HCT116 (cell line): ENCODE measurements at regions of chr5 and their contacts with region 1.

Region 1: DNA sequence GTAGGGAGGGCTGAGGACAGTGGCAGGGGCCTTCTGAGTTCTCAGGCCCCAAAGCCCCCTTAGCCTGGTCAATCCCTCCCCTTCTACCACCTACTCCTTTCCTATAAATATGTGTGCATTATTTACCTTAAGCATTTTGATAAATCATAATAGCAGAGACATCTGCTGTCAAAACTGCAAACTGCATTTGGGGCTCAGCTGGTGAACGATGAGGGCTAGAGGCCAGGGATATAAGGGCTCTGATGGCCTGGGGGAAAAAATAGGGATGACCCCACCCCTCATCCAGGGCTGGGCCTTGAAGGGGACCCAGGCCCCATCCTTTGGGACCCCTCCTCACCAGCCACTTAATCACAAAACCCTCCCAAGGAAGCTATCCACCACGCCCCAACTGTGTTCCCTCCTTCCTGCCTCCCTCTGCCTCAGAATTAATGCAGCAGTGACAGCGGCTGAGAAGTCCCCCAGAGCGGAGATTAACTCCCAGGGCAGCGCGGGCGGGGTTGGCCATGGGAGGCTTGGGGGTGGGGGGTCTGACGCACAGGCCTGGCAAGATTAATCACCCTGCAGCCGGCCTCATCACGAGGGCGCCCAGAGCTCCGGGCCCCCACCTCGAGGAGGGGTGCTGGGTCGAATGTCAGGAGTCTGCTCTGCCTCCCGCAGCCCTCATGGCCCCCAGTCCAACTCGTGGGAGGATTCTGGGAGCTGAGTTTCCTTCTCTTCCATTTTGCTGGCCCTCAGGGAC is 42.1 kb downstream of the CXXC5 start:
- DNase-seq: no peak
- ATAC-seq: peak; percentile 58
- H3K4me3 ChIP-seq: no peak overlapping the region
- H3K27ac ChIP-seq: no peak overlapping the region; the same call in 1 of the 2 replicates
- H3K4me1 ChIP-seq: peaks cover 4 to 16% of the 10 kb centered on the region in 2 experiments; a peak in 3 of 4 replicates
- H3K27me3 ChIP-seq: no peaks in the 10 kb centered on the region
- CTCF ChIP-seq: peak in 2 of 3 experiments; percentile 46 to 62; a peak in 4 of 6 replicates
- POLR2A ChIP-seq: no peak
- RAD21 ChIP-seq: no peak

Region 2: DNA sequence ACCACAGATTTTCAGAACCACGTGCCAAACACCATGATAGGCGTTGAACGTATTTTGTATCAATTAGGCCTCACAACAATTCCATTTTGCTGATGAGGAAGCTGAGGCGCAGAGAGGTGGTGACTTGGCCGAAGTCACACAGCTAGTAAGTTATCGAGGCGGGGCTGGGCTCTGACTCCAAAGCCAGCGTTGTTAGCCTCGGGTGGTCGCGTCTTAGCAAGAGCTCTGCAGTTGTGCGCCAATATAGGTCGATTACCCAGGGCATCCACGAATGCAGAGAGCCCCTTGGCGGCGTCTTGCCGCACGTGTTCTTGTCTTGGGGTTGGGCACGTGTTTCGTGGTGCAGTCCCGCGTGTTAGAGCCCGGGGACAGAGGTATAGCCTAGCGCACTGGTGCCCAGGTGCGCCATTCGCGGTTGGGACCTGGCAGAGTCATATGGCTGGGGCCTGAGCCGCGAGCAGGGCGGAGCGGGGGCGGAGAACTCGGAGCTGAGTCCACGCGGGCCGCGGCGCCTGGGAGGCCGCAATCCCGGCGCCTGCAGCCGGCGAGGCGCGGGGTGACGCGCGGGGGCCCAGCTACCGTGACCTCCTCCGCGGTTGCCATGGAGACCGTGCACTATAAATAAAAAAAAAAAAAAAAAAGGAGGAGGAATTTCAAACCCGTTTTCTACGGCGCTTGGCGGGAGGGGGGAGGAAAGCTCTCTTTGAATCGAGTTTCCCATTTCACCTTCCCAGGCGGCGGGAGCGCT is 20.3 kb after region 1 on chr5:
- CTCF ChIA-PET with region 1: no interaction called
- POLR2A ChIA-PET with region 1: no interaction called
- RAD21 ChIA-PET with region 1: no interaction called
- intact Hi-C with region 1: no loop called
- DNase-seq: no peak
- ATAC-seq: peak; percentile 39
- H3K4me3 ChIP-seq: peak overlapping the region; percentile 46 to 61
- H3K27ac ChIP-seq: no peak overlapping the region
- H3K4me1 ChIP-seq: peaks cover 30 to 40% of the 10 kb centered on the region in 2 experiments
- H3K27me3 ChIP-seq: no peaks in the 10 kb centered on the region
- CTCF ChIP-seq: no peak
- POLR2A ChIP-seq: no peak
- RAD21 ChIP-seq: no peak

Region 3: DNA sequence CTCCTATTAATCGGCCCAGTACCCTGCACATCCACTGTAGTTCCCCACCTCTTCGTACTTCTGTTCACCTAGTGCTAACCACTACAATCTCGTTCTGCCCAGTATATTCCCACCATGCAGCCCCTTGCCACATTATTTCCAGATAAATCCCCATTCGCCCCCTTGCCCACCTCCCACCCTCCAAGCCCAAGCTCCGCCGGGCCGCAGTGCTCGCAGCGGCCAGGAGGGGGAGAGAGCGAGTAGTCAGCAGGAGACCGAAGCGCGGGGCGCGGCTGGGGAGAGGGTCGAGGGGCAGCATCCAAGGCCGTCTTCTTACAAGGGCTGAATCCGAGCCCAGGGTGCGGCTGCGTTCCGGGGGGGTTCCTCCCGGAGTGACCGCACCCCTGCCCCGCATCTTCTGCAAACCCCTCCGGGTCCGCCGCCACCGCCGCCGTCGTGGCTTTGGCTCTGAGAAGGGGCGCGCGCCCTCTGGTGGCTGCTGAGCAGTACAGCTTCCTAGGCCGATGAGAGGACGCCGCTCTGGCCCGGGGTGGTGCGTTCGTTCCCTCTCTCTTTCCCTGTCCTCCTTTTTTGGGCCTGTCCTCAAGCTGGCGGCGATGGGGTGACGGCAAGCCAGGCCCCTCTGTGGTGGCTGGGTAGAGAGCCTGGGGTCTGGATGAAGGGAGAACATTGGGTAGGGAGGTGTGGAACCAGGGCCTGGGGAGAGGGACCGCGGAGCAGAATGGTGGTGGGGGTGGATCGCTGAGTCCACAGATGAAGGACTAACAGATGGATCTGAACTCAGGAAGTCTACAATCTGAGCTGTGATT is 75.4 kb after region 1 on chr5:
- CTCF ChIA-PET with region 1: interaction called, 12 read pairs
- POLR2A ChIA-PET with region 1: no interaction called
- RAD21 ChIA-PET with region 1: interaction called in 1 of 2 experiments, 3 read pairs
- intact Hi-C with region 1: no loop called
- DNase-seq: no peak
- ATAC-seq: peak; percentile 91
- H3K4me3 ChIP-seq: peak overlapping the region; percentile 43 to 52
- H3K27ac ChIP-seq: peak overlapping the region; percentile 51; the same call in 1 of the 2 replicates
- H3K4me1 ChIP-seq: peaks cover 15 to 36% of the 10 kb centered on the region in 2 experiments; a peak in 3 of 4 replicates
- H3K27me3 ChIP-seq: no peaks in the 10 kb centered on the region
- CTCF ChIP-seq: peak in 2 of 3 experiments; percentile 83 to 95; a peak in 4 of 6 replicates
- POLR2A ChIP-seq: no peak
- RAD21 ChIP-seq: no peak

Region 4: DNA sequence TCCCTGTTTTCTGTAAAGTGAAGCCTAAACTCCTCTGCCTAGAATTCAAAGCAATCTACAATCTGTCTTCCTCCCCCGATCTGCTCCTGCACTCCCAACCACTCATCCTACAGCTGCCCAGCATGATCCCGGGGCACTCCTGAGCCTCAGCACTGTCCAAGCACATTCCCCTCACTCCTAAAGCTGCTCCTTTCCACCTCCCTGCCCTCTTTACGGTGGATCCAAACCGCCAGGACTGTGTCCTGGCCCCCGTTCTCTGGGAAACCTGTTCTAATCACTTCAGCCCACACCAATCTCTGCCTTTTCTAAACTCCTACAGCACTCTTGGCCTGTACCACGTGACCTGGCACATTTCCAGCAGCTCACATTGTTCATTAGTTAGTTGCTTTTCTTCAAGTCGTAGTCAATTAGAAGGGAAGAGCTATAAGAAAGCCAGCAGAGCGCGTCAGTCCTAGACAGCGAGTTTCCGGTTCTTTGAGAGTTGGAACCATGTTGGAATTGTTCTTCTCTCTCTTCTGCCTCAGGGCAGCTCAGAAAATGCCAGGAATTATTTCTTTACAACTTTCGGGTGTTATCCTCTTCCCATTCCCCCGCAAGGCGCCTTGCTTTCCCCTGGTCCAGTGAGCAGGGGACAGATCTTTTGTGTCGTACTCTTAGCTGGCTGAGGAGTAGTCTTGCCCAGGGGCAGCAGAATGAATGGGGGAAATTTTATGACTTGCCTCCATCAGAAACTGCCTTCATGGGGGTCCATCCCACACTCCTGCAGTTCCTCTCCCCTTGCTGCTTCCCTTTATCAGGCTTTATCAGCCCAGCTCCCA is 292.1 kb after region 1 on chr5:
- CTCF ChIA-PET with region 1: no interaction called
- POLR2A ChIA-PET with region 1: no interaction called
- RAD21 ChIA-PET with region 1: no interaction called
- intact Hi-C with region 1: no loop called
- DNase-seq: no peak
- ATAC-seq: no peak
- H3K4me3 ChIP-seq: no peak overlapping the region
- H3K27ac ChIP-seq: no peak overlapping the region
- H3K4me1 ChIP-seq: peaks cover 20 to 43% of the 10 kb centered on the region in 2 experiments
- H3K27me3 ChIP-seq: no peaks in the 10 kb centered on the region
- CTCF ChIP-seq: no peak
- POLR2A ChIP-seq: no peak
- RAD21 ChIP-seq: no peak